ENCODE measurements at regions of chr14 and their contacts with region 1.

Region 1: DNA sequence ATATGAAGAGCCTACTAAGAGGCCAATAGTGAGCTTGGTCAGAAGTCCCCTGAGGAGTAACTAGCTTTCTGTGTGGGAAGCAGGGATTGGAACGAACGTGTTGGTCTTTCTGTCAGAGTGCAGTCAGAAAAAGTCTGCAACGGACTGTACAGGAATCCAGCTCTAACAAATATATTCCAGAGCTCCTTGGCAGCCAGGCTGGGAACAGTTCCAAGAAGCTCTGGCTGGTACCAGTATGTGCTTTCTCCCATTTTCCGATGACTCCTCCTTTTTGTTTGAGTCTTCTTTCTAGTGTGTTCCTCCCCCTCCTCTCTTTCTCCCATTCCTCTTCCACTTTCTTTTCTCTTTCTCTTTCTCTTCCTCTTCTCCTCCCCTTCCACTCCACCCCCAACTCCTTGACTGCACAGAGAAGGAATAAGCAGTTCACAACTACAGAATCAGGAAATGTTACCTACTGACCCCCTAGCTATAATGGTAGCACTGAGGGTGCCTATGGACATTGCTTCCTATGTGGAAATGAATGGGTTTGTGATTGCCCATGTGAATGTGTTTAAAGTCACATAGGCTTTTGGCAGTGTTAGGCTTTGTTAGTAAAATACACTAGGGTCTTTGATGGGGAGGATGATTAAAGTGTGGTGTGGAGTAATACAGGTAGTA is 59.9 kb downstream of the TTLL5 start:
- DNase-seq: peak; percentile 35 to 79 (median 55)
- H3K4me3 ChIP-seq: no peak overlapping the region
- H3K27ac ChIP-seq: peak overlapping the region in 1 of 2 donors; percentile 40
- H3K4me1 ChIP-seq: peaks cover 8% of the 10 kb centered on the region
- H3K27me3 ChIP-seq: no peaks in the 10 kb centered on the region
- CTCF ChIP-seq: no peak
- EP300 ChIP-seq: no peak
- POLR2A ChIP-seq: no peak

Region 2: GRCh38 chr14:73909681-73910080 is 1811.3 kb before region 1 on chr14:
- intact Hi-C with region 1: loop called in 1 of 4 experiments (anchors 5 kb)
- DNase-seq: peak in 1 of 5 donors; percentile 41
- H3K4me3 ChIP-seq: no peak overlapping the region
- H3K27ac ChIP-seq: peak overlapping the region in 1 of 2 donors; percentile 50
- H3K4me1 ChIP-seq: peaks cover 3% of the 10 kb centered on the region
- H3K27me3 ChIP-seq: no peaks in the 10 kb centered on the region
- CTCF ChIP-seq: no peak
- EP300 ChIP-seq: no peak
- POLR2A ChIP-seq: no peak

Region 3: GRCh38 chr14:75800792-75801191 is 79.8 kb after region 1 on chr14:
- intact Hi-C with region 1: no loop called
- DNase-seq: no peak
- H3K4me3 ChIP-seq: no peak overlapping the region
- H3K27ac ChIP-seq: no peak overlapping the region
- H3K4me1 ChIP-seq: no peaks in the 10 kb centered on the region
- H3K27me3 ChIP-seq: no peaks in the 10 kb centered on the region
- CTCF ChIP-seq: no peak
- EP300 ChIP-seq: no peak
- POLR2A ChIP-seq: no peak

Measured in ovary (tissue), 10 donors.